Activated B cell treated with CpG ODN at 0.5 μM for 24 hours (primary cell): ENCODE measurements at regions of chr11 and their contacts with region 1.

Region 1: GRCh38 chr11:57456960-57457642 is 3.2 kb upstream of the RTN4RL2 start:
- DNase-seq: peak; percentile 76
- ATAC-seq: peak; percentile 76
- H3K4me3 Mint-ChIP-seq: peak overlapping the region; percentile 70
- H3K27ac Mint-ChIP-seq: no peak overlapping the region
- H3K4me1 Mint-ChIP-seq: peaks cover 28% of the 10 kb centered on the region
- H3K27me3 Mint-ChIP-seq: peaks cover 28% of the 10 kb centered on the region
- CTCF ChIP-seq: peak; percentile 93

Region 2: GRCh38 chr11:57335343-57336110 is 121.6 kb before region 1 on chr11 and contains the start of gene SSRP1:
- CTCF ChIA-PET with region 1: no interaction called
- POLR2A ChIA-PET with region 1: no interaction called
- intact Hi-C with region 1: no loop called
- DNase-seq: peak; percentile 77
- ATAC-seq: peak; percentile 97
- H3K4me3 Mint-ChIP-seq: peak within 1 kb of the TSS; percentile 94
- H3K27ac Mint-ChIP-seq: peak within 1 kb of the TSS; percentile 98
- H3K4me1 Mint-ChIP-seq: peaks cover 27% of the 10 kb centered on the region
- H3K27me3 Mint-ChIP-seq: peaks cover 2% of the 10 kb centered on the region
- CTCF ChIP-seq: no peak
- total RNA-seq, gene SSRP1: 120 and 127 TPM in 2 replicates

Region 3: DNA sequence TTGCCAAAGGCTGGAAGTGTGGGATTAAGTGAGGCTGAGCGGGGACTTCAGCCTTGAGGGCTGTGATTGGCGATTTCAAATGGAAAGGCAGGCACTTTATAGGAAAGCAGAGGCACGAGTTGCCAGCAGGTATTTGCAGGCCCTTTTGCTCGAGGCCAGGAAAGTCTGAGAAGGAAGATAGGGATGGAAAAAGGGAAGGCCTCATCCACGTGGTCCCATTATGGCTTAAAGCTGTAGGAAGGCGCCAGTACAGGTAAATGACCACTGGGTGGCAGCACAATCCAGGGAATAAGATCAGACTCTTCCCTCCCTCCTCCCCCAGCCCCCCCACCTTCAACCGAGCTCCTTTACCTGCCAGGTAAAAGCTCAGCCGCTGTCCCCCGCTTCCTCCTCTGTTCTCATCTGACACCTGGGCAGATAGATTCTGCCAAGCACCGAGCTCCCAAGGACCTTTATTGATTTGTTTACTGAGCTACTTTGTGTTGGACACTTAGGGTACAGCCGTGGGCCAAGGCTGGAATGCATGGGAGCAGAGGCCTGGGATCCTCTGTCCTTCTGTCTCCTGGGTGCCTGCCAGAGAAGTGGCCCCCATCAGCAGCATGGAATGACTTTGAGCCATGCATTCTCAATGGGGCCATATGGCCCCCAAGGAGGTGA is 111.4 kb before region 1 on chr11:
- CTCF ChIA-PET with region 1: interaction called, 21 read pairs
- POLR2A ChIA-PET with region 1: interaction called, 3 read pairs
- intact Hi-C with region 1: loop called (anchors 1 kb)
- DNase-seq: peak; percentile 40
- ATAC-seq: peak; percentile 91
- H3K4me3 Mint-ChIP-seq: no peak overlapping the region
- H3K27ac Mint-ChIP-seq: no peak overlapping the region
- H3K4me1 Mint-ChIP-seq: peaks cover 3% of the 10 kb centered on the region
- H3K27me3 Mint-ChIP-seq: peaks cover 3% of the 10 kb centered on the region
- CTCF ChIP-seq: no peak

Region 4: DNA sequence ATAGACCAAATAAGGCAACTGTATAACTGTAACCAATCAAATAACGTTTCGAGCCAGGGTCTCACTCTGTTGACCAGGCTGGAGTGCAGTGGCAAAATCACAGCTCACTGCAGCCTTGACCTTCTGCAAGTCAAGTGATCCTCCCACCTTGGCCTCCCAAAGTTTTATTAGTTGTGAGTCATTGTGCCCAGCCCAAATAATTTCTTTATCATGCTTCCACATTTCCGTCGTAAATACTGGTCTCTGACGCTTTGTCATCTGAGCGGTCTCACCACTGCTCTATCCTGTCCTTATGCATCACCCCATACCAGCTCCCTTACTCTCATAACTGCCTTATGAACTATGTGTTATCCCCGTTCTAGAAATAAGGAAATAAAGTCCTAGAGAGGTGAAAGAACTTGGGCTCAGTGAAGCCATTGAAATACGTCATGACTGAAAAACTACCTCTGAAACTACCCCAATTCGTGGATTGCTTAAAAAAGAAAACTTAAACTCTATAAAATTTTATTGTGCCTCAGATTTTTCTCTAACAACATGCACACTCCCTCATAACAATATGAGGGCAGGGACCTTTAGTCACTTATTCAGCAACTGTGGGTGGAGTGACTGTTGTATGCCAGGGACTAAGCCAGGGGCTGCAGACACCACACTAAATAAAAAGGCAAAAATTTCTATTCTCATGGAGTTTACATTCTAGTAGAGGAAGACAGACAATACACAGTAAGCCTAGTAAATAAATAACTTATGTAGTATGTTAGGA is 12.6 kb before region 1 on chr11:
- CTCF ChIA-PET with region 1: interaction called, 21 read pairs
- POLR2A ChIA-PET with region 1: interaction called, 4 read pairs
- intact Hi-C with region 1: no loop called
- DNase-seq: no peak
- ATAC-seq: no peak
- H3K4me3 Mint-ChIP-seq: no peak overlapping the region
- H3K27ac Mint-ChIP-seq: no peak overlapping the region
- H3K4me1 Mint-ChIP-seq: no peaks in the 10 kb centered on the region
- H3K27me3 Mint-ChIP-seq: peaks cover 12% of the 10 kb centered on the region
- CTCF ChIP-seq: no peak

Region 5: GRCh38 chr11:57480409-57481137 is 23.5 kb after region 1 on chr11:
- CTCF ChIA-PET with region 1: interaction called, 191 read pairs
- POLR2A ChIA-PET with region 1: interaction called, 22 read pairs
- intact Hi-C with region 1: loop called (anchors 1 kb)
- DNase-seq: peak; percentile 47
- ATAC-seq: peak; percentile 29
- H3K4me3 Mint-ChIP-seq: no peak overlapping the region
- H3K27ac Mint-ChIP-seq: no peak overlapping the region
- H3K4me1 Mint-ChIP-seq: peaks cover 59% of the 10 kb centered on the region
- H3K27me3 Mint-ChIP-seq: peaks cover 7% of the 10 kb centered on the region
- CTCF ChIP-seq: no peak

Region 6: GRCh38 chr11:57515332-57516060 is 58.4 kb after region 1 on chr11 and contains the start of gene SLC43A1:
- CTCF ChIA-PET with region 1: interaction called, 12 read pairs
- POLR2A ChIA-PET with region 1: interaction called, 4 read pairs
- intact Hi-C with region 1: loop called (anchors 1 kb)
- DNase-seq: peak; percentile 27
- ATAC-seq: peak; percentile 29
- H3K4me3 Mint-ChIP-seq: peak within 1 kb of the TSS; percentile 97
- H3K27ac Mint-ChIP-seq: peak within 1 kb of the TSS; percentile 80
- H3K4me1 Mint-ChIP-seq: peaks cover 43% of the 10 kb centered on the region
- H3K27me3 Mint-ChIP-seq: no peaks in the 10 kb centered on the region
- CTCF ChIP-seq: no peak
- total RNA-seq, gene SLC43A1: 11.1 and 12.8 TPM in 2 replicates

Region 7: GRCh38 chr11:57681168-57681567 is 224.1 kb after region 1 on chr11:
- CTCF ChIA-PET with region 1: no interaction called
- POLR2A ChIA-PET with region 1: no interaction called
- intact Hi-C with region 1: no loop called
- DNase-seq: no peak
- ATAC-seq: no peak
- H3K4me3 Mint-ChIP-seq: no peak overlapping the region
- H3K27ac Mint-ChIP-seq: no peak overlapping the region
- H3K4me1 Mint-ChIP-seq: peaks cover 11% of the 10 kb centered on the region
- H3K27me3 Mint-ChIP-seq: no peaks in the 10 kb centered on the region
- CTCF ChIP-seq: no peak